ENCODE measurements at regions of chr6 and their contacts with region 1.

Region 1: GRCh38 chr6:105780146-105780860 is 305.8 kb upstream of the PRDM1 start:
- DNase-seq: peak; percentile 60 to 99
- H3K4me3 ChIP-seq: no peak overlapping the region; the same call in 1 of the 2 replicates
- H3K27ac ChIP-seq: peak overlapping the region; percentile 71
- H3K4me1 ChIP-seq: peaks cover 24% of the 10 kb centered on the region
- H3K27me3 ChIP-seq: no peaks in the 10 kb centered on the region
- CTCF ChIP-seq: no peak

Region 2: DNA sequence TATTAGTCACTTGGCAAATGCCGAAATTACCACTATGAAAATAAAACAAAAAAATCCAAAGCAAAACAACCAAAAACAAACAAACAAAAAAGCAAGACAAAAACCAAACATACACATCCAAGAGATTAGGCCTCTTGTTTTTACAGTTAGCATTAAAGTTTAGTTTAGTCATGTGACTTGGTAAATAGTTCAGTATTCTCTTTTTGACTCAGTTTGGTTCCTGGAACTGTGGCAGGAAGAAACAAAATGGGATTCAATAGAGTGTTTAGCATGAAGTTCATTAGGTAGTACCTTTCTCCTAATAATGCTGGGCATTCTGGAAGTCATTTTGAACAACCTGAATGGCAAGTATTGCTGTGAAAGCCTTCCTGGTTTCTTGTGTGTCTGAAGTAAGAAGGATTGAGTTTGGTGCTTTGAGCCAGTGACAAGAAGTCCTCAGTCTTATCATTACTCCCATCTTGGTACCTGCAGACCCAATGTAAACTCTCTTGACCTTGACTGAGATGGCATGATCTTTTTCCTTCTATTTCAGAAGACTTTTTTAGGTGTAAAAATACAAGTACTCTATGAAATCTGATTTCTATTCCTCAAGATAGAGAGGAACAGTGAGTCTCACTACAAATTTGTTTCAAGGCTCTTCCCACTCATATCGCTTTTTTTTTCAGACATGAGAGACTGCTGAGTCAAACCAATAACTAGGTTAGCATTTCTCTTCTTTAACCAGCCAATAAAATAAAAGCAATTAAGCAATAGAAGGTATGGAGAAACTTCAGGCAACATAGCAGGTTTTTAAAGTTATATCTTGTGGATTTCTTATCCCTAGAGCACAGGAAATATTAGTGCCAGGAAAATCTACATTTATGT is 153.8 kb before region 1 on chr6:
- CTCF ChIA-PET with region 1: no interaction called
- POLR2A ChIA-PET with region 1: no interaction called
- intact Hi-C with region 1: no loop called
- DNase-seq: no peak
- H3K4me3 ChIP-seq: no peak overlapping the region
- H3K27ac ChIP-seq: no peak overlapping the region
- H3K4me1 ChIP-seq: no peaks in the 10 kb centered on the region
- H3K27me3 ChIP-seq: no peaks in the 10 kb centered on the region
- CTCF ChIP-seq: no peak

Region 3: DNA sequence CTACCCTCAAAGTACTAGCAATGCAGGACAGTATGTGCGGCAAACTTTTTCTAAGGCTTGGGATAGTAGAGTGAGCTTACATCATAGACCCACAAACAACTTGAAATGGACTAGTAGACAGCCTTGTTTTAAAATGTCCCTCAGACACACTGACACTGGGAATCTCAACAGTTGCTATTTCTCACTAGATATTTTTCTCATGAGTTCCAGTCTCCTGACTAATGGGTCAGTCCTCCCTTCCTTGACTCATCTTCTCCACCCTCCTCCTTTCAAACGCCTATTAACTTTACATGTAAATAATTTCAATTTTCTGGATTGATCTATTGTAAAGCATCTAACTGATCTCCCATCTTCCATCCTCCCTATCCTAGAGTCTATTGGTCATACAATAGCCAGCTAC is 69.1 kb before region 1 on chr6:
- CTCF ChIA-PET with region 1: no interaction called
- POLR2A ChIA-PET with region 1: interaction called, 10 read pairs
- intact Hi-C with region 1: no loop called
- DNase-seq: no peak
- H3K4me3 ChIP-seq: no peak overlapping the region
- H3K27ac ChIP-seq: no peak overlapping the region
- H3K4me1 ChIP-seq: no peaks in the 10 kb centered on the region
- H3K27me3 ChIP-seq: no peaks in the 10 kb centered on the region
- CTCF ChIP-seq: no peak

Region 4: GRCh38 chr6:106026748-106027715 is 246.7 kb after region 1 on chr6:
- CTCF ChIA-PET with region 1: no interaction called
- POLR2A ChIA-PET with region 1: no interaction called
- intact Hi-C with region 1: no loop called
- DNase-seq: no peak
- H3K4me3 ChIP-seq: no peak overlapping the region
- H3K27ac ChIP-seq: no peak overlapping the region
- H3K4me1 ChIP-seq: no peaks in the 10 kb centered on the region
- H3K27me3 ChIP-seq: no peaks in the 10 kb centered on the region
- CTCF ChIP-seq: no peak

Region 5: GRCh38 chr6:106677282-106677681 is 897.0 kb after region 1 on chr6:
- CTCF ChIA-PET with region 1: no interaction called
- POLR2A ChIA-PET with region 1: no interaction called
- intact Hi-C with region 1: no loop called
- DNase-seq: no peak
- H3K4me3 ChIP-seq: no peak overlapping the region
- H3K27ac ChIP-seq: no peak overlapping the region
- H3K4me1 ChIP-seq: no peaks in the 10 kb centered on the region
- H3K27me3 ChIP-seq: no peaks in the 10 kb centered on the region
- CTCF ChIP-seq: no peak